ENCODE measurements at regions of chr5 and their contacts with region 1.

Region 1: GRCh38 chr5:113678924-113679575 is 165.6 kb downstream of the YTHDC2 start:
- DNase-seq: peak; percentile 70
- H3K4me3 ChIP-seq: no peak overlapping the region
- H3K27ac ChIP-seq: no peak overlapping the region
- H3K4me1 ChIP-seq: no peaks in the 10 kb centered on the region
- H3K27me3 ChIP-seq: no peaks in the 10 kb centered on the region
- CTCF ChIP-seq: peak; percentile 83

Region 2: DNA sequence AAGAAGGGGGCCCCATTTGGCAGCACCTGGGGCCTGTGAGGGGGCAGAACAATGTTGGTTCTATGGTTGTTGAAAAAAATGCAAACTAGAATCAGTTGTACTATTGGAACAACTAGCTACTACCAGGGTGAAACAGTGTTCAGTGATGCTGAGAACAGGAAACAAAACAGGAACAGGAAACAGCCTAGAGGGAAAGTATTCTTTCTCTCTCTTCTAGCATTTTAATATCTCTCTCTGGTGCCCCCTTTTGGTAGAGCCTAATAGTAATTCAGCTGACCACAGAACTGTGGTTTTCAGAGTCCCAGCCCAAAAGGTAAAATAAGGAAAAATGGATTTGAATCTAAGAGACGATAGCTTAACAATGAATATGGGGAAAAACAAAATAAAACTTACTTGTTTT is 544.8 kb after region 1 on chr5:
- CTCF ChIA-PET with region 1: no interaction called
- POLR2A ChIA-PET with region 1: no interaction called
- intact Hi-C with region 1: loop called (anchors 10 kb)
- DNase-seq: peak; percentile 28
- H3K4me3 ChIP-seq: no peak overlapping the region
- H3K27ac ChIP-seq: no peak overlapping the region
- H3K4me1 ChIP-seq: no peaks in the 10 kb centered on the region
- H3K27me3 ChIP-seq: no peaks in the 10 kb centered on the region
- CTCF ChIP-seq: peak; percentile 52

Region 3: GRCh38 chr5:114361724-114362196 is 682.7 kb after region 1 on chr5 and contains the start of gene KCNN2:
- CTCF ChIA-PET with region 1: no interaction called
- POLR2A ChIA-PET with region 1: no interaction called
- intact Hi-C with region 1: loop called (anchors 5 kb)
- DNase-seq: peak; percentile 77
- H3K4me3 ChIP-seq: peak within 1 kb of the TSS; percentile 49
- H3K27ac ChIP-seq: no peak within 1 kb of the TSS
- H3K4me1 ChIP-seq: no peaks in the 10 kb centered on the region
- H3K27me3 ChIP-seq: peaks cover 83% of the 10 kb centered on the region
- CTCF ChIP-seq: no peak
- total RNA-seq, gene KCNN2: 0.17 and 0.28 TPM in 2 replicates

Region 4: GRCh38 chr5:114789773-114790402 is 1110.8 kb after region 1 on chr5:
- CTCF ChIA-PET with region 1: no interaction called
- POLR2A ChIA-PET with region 1: no interaction called
- intact Hi-C with region 1: loop called (anchors 5 kb)
- DNase-seq: peak; percentile 43
- H3K4me3 ChIP-seq: no peak overlapping the region
- H3K27ac ChIP-seq: no peak overlapping the region
- H3K4me1 ChIP-seq: no peaks in the 10 kb centered on the region
- H3K27me3 ChIP-seq: no peaks in the 10 kb centered on the region
- CTCF ChIP-seq: peak; percentile 60

Region 5: GRCh38 chr5:115246361-115246991 is 1567.4 kb after region 1 on chr5:
- CTCF ChIA-PET with region 1: no interaction called
- POLR2A ChIA-PET with region 1: no interaction called
- intact Hi-C with region 1: loop called (anchors 10 kb)
- DNase-seq: peak; percentile 64
- H3K4me3 ChIP-seq: no peak overlapping the region
- H3K27ac ChIP-seq: no peak overlapping the region
- H3K4me1 ChIP-seq: no peaks in the 10 kb centered on the region
- H3K27me3 ChIP-seq: no peaks in the 10 kb centered on the region
- CTCF ChIP-seq: peak; percentile 76